MCF 10A (cell line): ENCODE measurements at regions of chr3 and their contacts with region 1.

Region 1: GRCh38 chr3:182683453-182683852 is 109.9 kb upstream of the ATP11B start:
- DNase-seq: peak; percentile 78
- H3K4me3 Mint-ChIP-seq: peak overlapping the region; percentile 46
- H3K27ac Mint-ChIP-seq: peak overlapping the region; percentile 21
- H3K4me1 Mint-ChIP-seq: peaks cover 10% of the 10 kb centered on the region
- H3K27me3 Mint-ChIP-seq: no peaks in the 10 kb centered on the region
- CTCF ChIP-seq: peak; percentile 94

Region 2: DNA sequence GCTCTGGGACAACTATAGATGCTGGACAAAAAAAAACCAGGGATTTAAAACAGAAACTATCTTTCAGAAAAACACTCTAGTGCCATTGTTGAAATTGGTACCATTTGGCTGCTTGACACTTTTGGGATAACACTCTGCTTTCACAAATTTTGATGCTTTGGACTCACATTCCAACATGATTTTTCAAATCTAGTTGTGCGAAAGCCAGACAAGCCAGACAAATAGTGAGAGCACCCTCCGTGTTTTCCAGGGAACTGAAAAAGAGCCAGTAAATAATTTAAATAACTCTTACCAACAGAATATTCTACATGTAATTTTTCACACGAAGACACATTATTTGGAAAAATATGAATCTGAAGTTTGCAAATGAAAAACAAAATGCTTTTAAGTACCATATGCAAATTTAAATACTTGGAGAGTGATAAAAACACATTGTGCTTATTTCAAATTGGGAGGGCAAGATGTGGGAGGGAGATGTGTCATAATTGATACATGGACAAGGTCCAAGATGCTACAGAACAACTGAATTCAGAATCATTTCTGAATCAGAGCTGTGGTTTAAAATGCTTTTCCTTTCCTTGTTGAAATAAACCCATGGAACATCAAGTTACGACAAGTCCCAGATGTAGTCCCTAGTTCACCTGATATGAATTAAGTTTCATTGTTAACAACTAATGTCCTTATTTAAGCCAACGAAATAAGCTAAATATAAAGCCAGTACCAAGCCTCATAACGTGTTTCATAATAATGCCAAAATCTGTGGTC is 1116.0 kb before region 1 on chr3:
- CTCF ChIA-PET with region 1: no interaction called
- POLR2A ChIA-PET with region 1: no interaction called
- intact Hi-C with region 1: loop called (anchors 10 kb)
- DNase-seq: peak; percentile 49
- H3K4me3 Mint-ChIP-seq: no peak overlapping the region
- H3K27ac Mint-ChIP-seq: peak overlapping the region; percentile 12
- H3K4me1 Mint-ChIP-seq: peaks cover 15% of the 10 kb centered on the region
- H3K27me3 Mint-ChIP-seq: no peaks in the 10 kb centered on the region
- CTCF ChIP-seq: no peak

Region 3: GRCh38 chr3:181948286-181948685 is 735.2 kb before region 1 on chr3:
- CTCF ChIA-PET with region 1: interaction called, 4 read pairs
- POLR2A ChIA-PET with region 1: interaction called, 3 read pairs
- intact Hi-C with region 1: loop called (anchors 1 kb)
- DNase-seq: peak; percentile 27
- H3K4me3 Mint-ChIP-seq: no peak overlapping the region
- H3K27ac Mint-ChIP-seq: no peak overlapping the region
- H3K4me1 Mint-ChIP-seq: no peaks in the 10 kb centered on the region
- H3K27me3 Mint-ChIP-seq: no peaks in the 10 kb centered on the region
- CTCF ChIP-seq: peak; percentile 43

Region 4: DNA sequence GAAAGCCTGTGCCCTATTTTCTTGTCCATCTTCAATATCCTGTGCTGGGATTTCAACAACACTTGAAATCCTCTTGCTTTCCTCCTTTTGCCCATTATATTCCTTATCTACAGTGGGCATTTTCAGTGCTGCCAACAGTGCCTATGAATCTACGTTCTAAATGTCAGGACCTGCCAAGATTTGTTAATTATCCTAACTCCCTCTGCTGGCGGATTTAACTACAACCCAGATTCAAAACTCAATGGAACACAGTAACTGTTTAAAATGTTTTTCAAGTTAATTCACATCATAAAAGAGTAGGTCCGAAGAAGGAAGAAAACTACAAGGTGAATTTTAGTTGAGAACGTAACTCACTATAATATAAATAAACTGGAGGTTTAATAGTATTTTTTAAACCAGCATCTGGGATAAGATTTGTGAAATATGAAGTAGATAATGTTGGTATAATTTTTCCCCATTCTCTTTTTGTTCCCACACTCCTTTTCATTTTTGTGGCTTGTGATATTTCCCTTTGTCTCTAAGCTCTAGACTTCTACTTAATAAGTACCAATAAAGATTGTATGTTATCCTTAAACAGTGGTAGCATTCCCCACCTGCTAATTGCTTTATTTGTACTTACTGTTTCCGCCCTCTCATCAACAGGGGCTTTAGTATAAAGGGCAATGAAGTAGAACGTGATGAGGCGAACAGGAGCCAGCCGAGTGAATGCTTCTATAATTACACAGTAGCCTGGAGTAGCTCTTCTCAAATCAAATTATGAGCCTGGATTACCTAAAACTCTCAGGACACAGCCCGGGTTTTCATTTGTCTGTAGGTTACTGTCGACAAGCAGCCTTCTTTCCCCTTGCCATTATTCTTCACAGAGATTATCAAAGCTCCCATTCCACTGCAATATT is 192.6 kb before region 1 on chr3:
- CTCF ChIA-PET with region 1: interaction called, 4 read pairs
- POLR2A ChIA-PET with region 1: no interaction called
- intact Hi-C with region 1: loop called (anchors 10 kb)
- DNase-seq: peak; percentile 62
- H3K4me3 Mint-ChIP-seq: no peak overlapping the region
- H3K27ac Mint-ChIP-seq: no peak overlapping the region
- H3K4me1 Mint-ChIP-seq: no peaks in the 10 kb centered on the region
- H3K27me3 Mint-ChIP-seq: no peaks in the 10 kb centered on the region
- CTCF ChIP-seq: peak; percentile 36